ENCODE measurements at regions of chr17 and their contacts with region 1.

Region 1: GRCh38 chr17:47717261-47717697 is 15.8 kb upstream of the TBX21 start:
- DNase-seq: peak in 3 of 14 experiments; percentile 22 to 61 (median 40)
- ATAC-seq: peak; percentile 37
- H3K4me3 ChIP-seq: no peak overlapping the region
- H3K4me3 Mint-ChIP-seq: no peak overlapping the region
- H3K27ac ChIP-seq: no peak overlapping the region
- H3K27ac Mint-ChIP-seq: no peak overlapping the region
- H3K4me1 ChIP-seq: peaks cover 99% of the 10 kb centered on the region
- H3K4me1 Mint-ChIP-seq: peaks cover 68% of the 10 kb centered on the region
- H3K27me3 ChIP-seq: peaks cover 0 to 6% of the 10 kb centered on the region in 2 experiments
- H3K27me3 Mint-ChIP-seq: peaks cover 15% of the 10 kb centered on the region
- CTCF ChIP-seq: peak; percentile 43

Region 2: GRCh38 chr17:47733047-47733673 is 15.9 kb after region 1 on chr17 and contains the start of gene TBX21:
- CTCF ChIA-PET with region 1: interaction called, 14 read pairs
- POLR2A ChIA-PET with region 1: interaction called, 11 read pairs
- intact Hi-C with region 1: no loop called
- DNase-seq: peak; percentile 79 to 95 (median 87)
- ATAC-seq: peak; percentile 91
- H3K4me3 ChIP-seq: peak within 1 kb of the TSS; percentile 90
- H3K4me3 Mint-ChIP-seq: peak within 1 kb of the TSS; percentile 95
- H3K27ac ChIP-seq: peak within 1 kb of the TSS in 1 of 2 donors; percentile 64
- H3K27ac Mint-ChIP-seq: peak within 1 kb of the TSS; percentile 85
- H3K4me1 ChIP-seq: peaks cover 67% of the 10 kb centered on the region
- H3K4me1 Mint-ChIP-seq: peaks cover 28% of the 10 kb centered on the region
- H3K27me3 ChIP-seq: peaks cover 0 to 2% of the 10 kb centered on the region in 2 experiments
- H3K27me3 Mint-ChIP-seq: peaks cover 11% of the 10 kb centered on the region
- CTCF ChIP-seq: peak; percentile 64
- total RNA-seq, gene TBX21: 10.6 to 12.3 TPM

Measured in CD4-positive, alpha-beta T cell (primary cell).